Activated naive CD4-positive, alpha-beta T cell treated with anti-CD3 and anti-CD28 coated beads for 36 hours (primary cell): ENCODE measurements at regions of chr11 and their contacts with region 1.

Region 1: GRCh38 chr11:66001942-66002647 is at the starts of genes BANF1 and EIF1AD:
- DNase-seq: peak; percentile 96
- H3K4me3 Mint-ChIP-seq: peak within 1 kb of the TSS; percentile 99
- H3K27ac Mint-ChIP-seq: peak within 1 kb of the TSS; percentile 99
- H3K4me1 Mint-ChIP-seq: peaks cover 44% of the 10 kb centered on the region
- H3K27me3 Mint-ChIP-seq: no peaks in the 10 kb centered on the region
- total RNA-seq, gene BANF1: 347 to 369 TPM
- total RNA-seq, gene EIF1AD: 31.2 to 31.7 TPM

Region 2: GRCh38 chr11:65711785-65712632 is 290.1 kb before region 1 on chr11 and contains the start of gene KAT5:
- CTCF ChIA-PET with region 1: no interaction called
- intact Hi-C with region 1: loop called (anchors 5 kb)
- DNase-seq: peak; percentile 100
- H3K4me3 Mint-ChIP-seq: peak within 1 kb of the TSS; percentile 95
- H3K27ac Mint-ChIP-seq: peak within 1 kb of the TSS; percentile 97
- H3K4me1 Mint-ChIP-seq: peaks cover 33% of the 10 kb centered on the region
- H3K27me3 Mint-ChIP-seq: no peaks in the 10 kb centered on the region
- total RNA-seq, gene KAT5: 60.1 to 67.1 TPM

Region 3: DNA sequence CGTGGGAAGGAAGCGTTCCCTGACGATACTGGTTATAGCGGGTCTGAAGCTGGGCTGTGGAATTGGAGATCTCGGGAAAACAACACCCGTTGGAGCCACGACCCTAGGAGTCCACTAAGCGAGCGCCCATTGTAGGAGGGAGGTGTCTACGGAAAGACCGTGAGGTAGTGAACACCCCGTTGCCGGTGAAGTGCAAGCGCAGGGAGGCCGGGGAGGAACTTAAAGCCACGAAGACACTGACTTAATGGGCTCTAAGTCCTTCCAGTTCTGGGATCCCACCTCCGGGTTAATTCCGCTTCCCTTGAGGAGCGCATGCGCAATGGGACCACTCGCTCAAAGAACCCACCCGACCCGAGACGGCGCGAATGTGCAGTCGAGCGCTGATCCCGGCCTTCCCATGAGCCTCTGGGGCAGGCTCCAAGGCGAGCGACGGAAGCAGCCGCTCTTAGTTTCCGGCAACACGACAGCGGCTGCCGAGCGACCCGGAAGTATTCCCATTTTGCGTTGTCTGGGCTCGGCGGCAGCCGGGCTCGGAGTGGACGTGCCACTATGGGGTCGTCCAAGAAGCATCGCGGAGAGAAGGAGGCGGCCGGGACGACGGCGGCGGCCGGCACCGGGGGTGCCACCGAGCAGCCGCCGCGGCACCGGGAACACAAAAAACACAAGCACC is 40.7 kb before region 1 on chr11 and contains the start of gene SART1:
- CTCF ChIA-PET with region 1: no interaction called
- intact Hi-C with region 1: loop called (anchors 1 kb)
- DNase-seq: peak; percentile 98
- H3K4me3 Mint-ChIP-seq: peak within 1 kb of the TSS; percentile 95
- H3K27ac Mint-ChIP-seq: peak within 1 kb of the TSS; percentile 95
- H3K4me1 Mint-ChIP-seq: peaks cover 48% of the 10 kb centered on the region
- H3K27me3 Mint-ChIP-seq: no peaks in the 10 kb centered on the region
- total RNA-seq, gene SART1: 50.1 to 59.9 TPM

Region 4: DNA sequence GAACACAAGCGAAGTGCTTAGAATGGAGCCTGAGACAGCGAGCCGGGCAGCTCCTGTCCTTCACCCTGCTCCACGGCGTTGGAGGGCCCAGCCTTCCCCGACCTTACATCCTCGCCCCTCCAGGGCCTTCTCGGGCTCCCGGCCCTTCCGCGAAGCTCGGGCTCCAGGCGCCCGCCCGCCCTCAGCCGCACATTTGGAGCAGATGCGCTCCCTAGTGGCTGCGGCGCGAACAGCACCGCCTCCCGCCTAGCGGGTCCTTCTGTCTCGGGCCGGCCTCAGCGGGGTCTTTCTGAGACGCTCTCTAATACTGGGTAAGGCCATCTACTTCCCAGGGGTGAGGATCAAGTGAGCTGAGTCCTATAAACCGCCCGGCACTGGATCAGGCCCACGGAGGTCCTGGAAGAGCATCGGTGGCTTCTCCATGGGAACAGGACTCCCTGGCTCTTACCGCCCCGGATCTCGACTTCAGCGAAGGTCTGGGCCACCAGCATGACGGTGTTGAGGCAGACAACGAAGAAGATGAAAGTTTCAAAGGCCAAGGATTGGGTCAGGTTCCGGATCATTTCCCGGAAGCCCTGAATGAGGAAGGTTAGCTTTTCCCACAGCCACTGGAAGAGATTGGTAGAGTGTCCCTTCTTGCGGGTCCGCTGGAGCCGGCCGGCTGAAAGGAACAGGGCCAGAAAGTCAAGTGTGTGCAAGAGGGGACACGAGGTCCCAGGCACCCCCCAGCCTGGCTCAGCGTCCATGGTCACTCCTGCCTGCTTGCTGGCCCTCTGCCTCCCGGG is 20.5 kb after region 1 on chr11:
- CTCF ChIA-PET with region 1: interaction called, 9 read pairs
- intact Hi-C with region 1: loop called (anchors 1 kb)
- DNase-seq: peak; percentile 81
- H3K4me3 Mint-ChIP-seq: peak overlapping the region; percentile 42
- H3K27ac Mint-ChIP-seq: no peak overlapping the region
- H3K4me1 Mint-ChIP-seq: peaks cover 5% of the 10 kb centered on the region
- H3K27me3 Mint-ChIP-seq: peaks cover 5% of the 10 kb centered on the region

Region 5: GRCh38 chr11:66051766-66052663 is 49.9 kb after region 1 on chr11 and contains the start of gene SF3B2:
- CTCF ChIA-PET with region 1: no interaction called
- intact Hi-C with region 1: loop called (anchors 2 kb)
- DNase-seq: peak; percentile 98
- H3K4me3 Mint-ChIP-seq: peak within 1 kb of the TSS; percentile 99
- H3K27ac Mint-ChIP-seq: peak within 1 kb of the TSS; percentile 96
- H3K4me1 Mint-ChIP-seq: peaks cover 41% of the 10 kb centered on the region
- H3K27me3 Mint-ChIP-seq: peaks cover 7% of the 10 kb centered on the region
- total RNA-seq, gene SF3B2: 319 to 321 TPM

Region 6: GRCh38 chr11:66136752-66137123 is 134.6 kb after region 1 on chr11:
- CTCF ChIA-PET with region 1: no interaction called
- intact Hi-C with region 1: loop called (anchors 2 kb)
- DNase-seq: peak; percentile 47
- H3K4me3 Mint-ChIP-seq: no peak overlapping the region
- H3K27ac Mint-ChIP-seq: peak overlapping the region; percentile 66
- H3K4me1 Mint-ChIP-seq: peaks cover 66% of the 10 kb centered on the region
- H3K27me3 Mint-ChIP-seq: no peaks in the 10 kb centered on the region